Esophagus muscularis mucosa (tissue), 4 donors: ENCODE measurements at regions of chr14 and their contacts with region 1.

Region 1: DNA sequence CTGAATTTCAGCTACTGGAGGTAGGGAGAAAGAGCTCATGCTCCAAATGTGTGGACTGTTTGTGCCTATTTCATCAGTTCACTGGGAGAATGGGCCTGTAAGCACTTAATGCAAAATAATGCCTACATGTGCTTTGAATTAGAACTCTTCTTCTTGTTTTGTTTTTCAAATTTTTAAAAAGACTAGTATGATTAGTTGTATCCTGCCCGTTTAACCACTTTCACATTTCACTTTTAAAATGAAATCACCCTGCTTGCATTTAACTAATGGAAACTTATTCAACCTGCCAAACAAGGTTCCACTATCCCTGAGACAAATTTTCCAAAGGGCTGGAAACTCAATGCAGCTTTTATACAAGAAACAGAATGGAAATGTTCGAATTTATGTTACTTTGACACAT is 79.7 kb downstream of the SAMD4A start:
- DNase-seq: no peak
- H3K4me3 ChIP-seq: no peak overlapping the region
- H3K27ac ChIP-seq: peak overlapping the region; percentile 15 to 85 (median 51)
- H3K4me1 ChIP-seq: peaks cover 37 to 79% (median 62%) of the 10 kb centered on the region in 4 donors
- H3K27me3 ChIP-seq: no peaks in the 10 kb centered on the region
- CTCF ChIP-seq: no peak
- EP300 ChIP-seq: no peak
- POLR2A ChIP-seq: no peak

Region 2: DNA sequence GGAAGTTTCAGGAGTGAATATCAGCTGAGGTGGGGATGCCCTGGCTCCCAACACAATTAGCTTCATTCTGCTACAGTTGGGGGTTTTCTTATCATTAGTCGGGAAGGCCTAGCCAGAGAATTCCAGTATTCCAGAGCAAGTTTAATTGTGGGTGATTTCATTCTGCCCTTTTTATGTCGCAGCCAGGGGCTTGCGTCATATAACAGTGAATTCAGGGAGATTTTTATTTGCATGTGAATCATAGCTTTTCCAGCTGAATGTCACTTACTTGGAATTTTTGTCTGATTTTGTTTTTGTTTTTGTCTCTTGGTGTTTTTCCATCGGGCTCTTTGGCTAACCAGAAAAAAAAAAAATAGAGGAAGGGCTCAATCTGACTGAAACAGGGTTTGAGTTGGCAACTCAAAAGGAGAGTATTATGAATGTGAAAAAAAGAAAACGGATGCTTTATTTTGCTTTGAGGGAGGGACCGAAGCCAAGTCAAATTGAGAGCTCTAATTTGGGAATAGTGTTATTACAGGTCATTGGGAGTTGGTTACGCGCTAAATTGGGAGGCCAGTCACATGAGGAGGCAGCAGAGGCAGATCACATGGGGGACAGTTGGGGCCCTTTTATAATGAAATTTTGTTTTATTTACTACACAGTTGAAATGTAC is 39.7 kb after region 1 on chr14:
- intact Hi-C with region 1: loop called (anchors 5 kb)
- DNase-seq: no peak
- H3K4me3 ChIP-seq: peak overlapping the region in 1 of 4 donors; percentile 2
- H3K27ac ChIP-seq: peak overlapping the region; percentile 76 to 84 (median 80)
- H3K4me1 ChIP-seq: peaks cover 64 to 83% (median 73%) of the 10 kb centered on the region in 4 donors
- H3K27me3 ChIP-seq: no peaks in the 10 kb centered on the region
- CTCF ChIP-seq: no peak
- EP300 ChIP-seq: no peak
- POLR2A ChIP-seq: no peak